Tibial artery (tissue), 4 donors: ENCODE measurements at regions of chr21 and their contacts with region 1.

Region 1: DNA sequence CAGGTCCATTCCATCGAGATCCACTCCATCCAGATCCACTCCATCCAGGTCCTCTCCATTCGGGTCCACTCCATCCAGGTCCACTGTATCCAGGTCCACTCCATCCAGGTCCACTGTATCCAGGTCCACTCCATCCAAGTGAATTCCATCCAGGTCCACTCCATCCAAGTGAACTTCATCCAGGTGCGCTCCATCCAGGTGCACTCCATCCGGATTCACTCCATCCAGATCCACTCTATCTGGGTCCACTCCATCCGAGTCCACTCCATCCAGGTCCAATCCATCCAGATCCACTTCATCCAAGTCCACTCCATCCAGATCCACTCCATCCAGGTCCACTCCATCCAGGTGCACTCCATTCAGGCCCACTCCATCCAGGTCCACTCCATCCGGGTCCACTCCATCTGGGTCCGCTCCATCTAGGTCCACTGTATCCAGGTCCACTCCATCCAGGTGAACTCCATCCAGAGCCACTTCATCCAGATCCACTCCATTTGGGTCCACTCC is 157.4 kb downstream of the HUNK start:
- DNase-seq: no peak
- H3K4me3 ChIP-seq: no peak overlapping the region
- H3K27ac ChIP-seq: no peak overlapping the region
- H3K4me1 ChIP-seq: no peaks in the 10 kb centered on the region
- H3K27me3 ChIP-seq: peaks cover 0 to 14% of the 10 kb centered on the region in 2 donors
- CTCF ChIP-seq: no peak

Region 2: DNA sequence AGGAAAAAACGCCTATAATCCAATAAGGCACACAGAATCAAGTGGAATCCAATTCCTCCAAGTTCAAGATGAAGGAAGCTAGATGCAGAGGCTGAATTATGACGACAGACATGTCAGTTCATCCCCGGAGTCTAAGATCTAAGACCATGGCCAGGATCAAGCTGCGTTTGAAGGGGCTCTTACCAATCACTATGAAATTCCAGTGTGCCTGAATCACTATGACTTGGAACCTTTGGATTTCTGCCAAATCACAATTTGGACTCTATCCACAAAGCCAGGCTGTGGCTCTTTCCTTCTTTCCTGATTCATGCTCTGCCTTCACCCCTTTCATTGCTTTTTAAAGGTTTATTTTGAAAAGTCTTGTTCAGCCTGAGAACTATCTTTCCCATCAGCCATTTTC is 1012.6 kb after region 1 on chr21:
- intact Hi-C with region 1: loop called (anchors 10 kb)
- DNase-seq: no peak
- H3K4me3 ChIP-seq: no peak overlapping the region
- H3K27ac ChIP-seq: no peak overlapping the region
- H3K4me1 ChIP-seq: no peaks in the 10 kb centered on the region
- H3K27me3 ChIP-seq: peaks cover 0 to 48% of the 10 kb centered on the region in 2 donors
- CTCF ChIP-seq: no peak